ENCODE measurements at regions of chr12 and their contacts with region 1.

Region 1: GRCh38 chr12:110100315-110100970 is 23.7 kb upstream of the IFT81 start:
- DNase-seq: peak; percentile 44 to 87
- ATAC-seq: peak; percentile 86 to 94 (median 90)
- H3K4me3 ChIP-seq: no peak overlapping the region
- H3K4me3 Mint-ChIP-seq: no peak overlapping the region
- H3K27ac ChIP-seq: no peak overlapping the region
- H3K27ac Mint-ChIP-seq: peak overlapping the region in 1 of 2 donors; percentile 44
- H3K4me1 ChIP-seq: no peaks in the 10 kb centered on the region
- H3K4me1 Mint-ChIP-seq: peaks cover 7 to 9% of the 10 kb centered on the region in 2 donors
- H3K27me3 ChIP-seq: no peaks in the 10 kb centered on the region
- H3K27me3 Mint-ChIP-seq: no peaks in the 10 kb centered on the region
- CTCF ChIP-seq: peak; percentile 91

Region 2: DNA sequence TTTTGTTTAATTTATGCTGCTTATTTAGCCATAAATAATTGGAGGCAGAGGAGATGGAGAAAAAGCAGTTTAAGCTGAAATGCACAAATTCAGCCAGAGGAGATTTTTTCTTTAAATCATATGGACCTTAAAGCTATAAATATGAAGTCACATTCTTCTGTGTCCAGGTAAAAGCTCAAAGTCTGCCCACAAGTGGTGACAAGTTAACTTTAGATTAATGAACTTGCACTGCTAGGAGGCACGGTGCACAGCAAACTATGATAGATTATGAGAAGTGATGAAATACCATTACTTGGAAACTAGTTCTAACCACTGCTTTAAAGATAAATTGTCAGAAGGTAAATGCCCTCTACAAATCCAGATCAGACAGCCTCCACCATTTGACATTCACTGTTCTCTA is 92.8 kb after region 1 on chr12:
- intact Hi-C with region 1: no loop called
- DNase-seq: no peak
- ATAC-seq: no peak
- H3K4me3 ChIP-seq: no peak overlapping the region
- H3K4me3 Mint-ChIP-seq: no peak overlapping the region
- H3K27ac ChIP-seq: no peak overlapping the region
- H3K27ac Mint-ChIP-seq: no peak overlapping the region
- H3K4me1 ChIP-seq: no peaks in the 10 kb centered on the region
- H3K4me1 Mint-ChIP-seq: no peaks in the 10 kb centered on the region
- H3K27me3 ChIP-seq: no peaks in the 10 kb centered on the region
- H3K27me3 Mint-ChIP-seq: peaks cover 0 to 2% of the 10 kb centered on the region in 2 donors
- CTCF ChIP-seq: no peak

Region 3: GRCh38 chr12:110245369-110245772 is 144.9 kb after region 1 on chr12:
- intact Hi-C with region 1: loop called (anchors 1 kb)
- DNase-seq: peak; percentile 23 to 67
- ATAC-seq: peak; percentile 47 to 60 (median 58)
- H3K4me3 ChIP-seq: no peak overlapping the region
- H3K4me3 Mint-ChIP-seq: no peak overlapping the region
- H3K27ac ChIP-seq: no peak overlapping the region
- H3K27ac Mint-ChIP-seq: no peak overlapping the region
- H3K4me1 ChIP-seq: no peaks in the 10 kb centered on the region
- H3K4me1 Mint-ChIP-seq: no peaks in the 10 kb centered on the region
- H3K27me3 ChIP-seq: no peaks in the 10 kb centered on the region
- H3K27me3 Mint-ChIP-seq: peaks cover 0 to 4% of the 10 kb centered on the region in 2 donors
- CTCF ChIP-seq: peak; percentile 32

Region 4: DNA sequence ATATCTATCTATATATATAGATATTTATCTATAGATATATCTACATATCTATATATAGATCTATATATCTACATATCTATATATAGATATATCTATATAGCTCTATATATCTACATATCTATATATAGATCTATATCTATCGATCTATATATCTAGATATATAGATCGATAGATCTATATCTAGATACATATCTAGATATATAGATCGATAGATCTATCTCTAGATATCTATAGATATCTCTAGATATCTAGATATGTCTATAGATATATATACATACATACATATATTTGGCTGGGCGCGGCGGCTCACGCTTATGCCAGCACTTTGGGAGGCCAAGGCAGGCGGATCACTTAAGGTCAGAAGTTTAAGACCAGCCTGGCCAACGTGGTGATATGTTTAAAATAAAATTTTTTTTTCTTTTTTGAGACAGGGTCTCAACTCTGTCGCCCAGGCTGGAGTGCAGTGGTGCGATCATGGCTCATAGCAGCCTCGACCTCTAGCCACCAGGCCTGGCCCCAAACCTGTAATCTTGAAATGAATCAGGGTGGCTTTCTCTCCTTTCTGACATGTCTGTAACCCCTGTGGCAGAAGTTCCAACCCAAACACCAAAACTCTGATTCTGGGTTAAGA is 331.6 kb after region 1 on chr12:
- intact Hi-C with region 1: loop called (anchors 1 kb)
- DNase-seq: no peak
- ATAC-seq: no peak
- H3K4me3 ChIP-seq: peak overlapping the region; percentile 45
- H3K4me3 Mint-ChIP-seq: no peak overlapping the region
- H3K27ac ChIP-seq: no peak overlapping the region
- H3K27ac Mint-ChIP-seq: peak overlapping the region; percentile 95 to 98
- H3K4me1 ChIP-seq: peaks cover 5% of the 10 kb centered on the region
- H3K4me1 Mint-ChIP-seq: peaks cover 0 to 5% of the 10 kb centered on the region in 2 donors
- H3K27me3 ChIP-seq: no peaks in the 10 kb centered on the region
- H3K27me3 Mint-ChIP-seq: no peaks in the 10 kb centered on the region
- CTCF ChIP-seq: no peak

Region 5: GRCh38 chr12:110600254-110600653 is 499.8 kb after region 1 on chr12:
- intact Hi-C with region 1: loop called (anchors 2 kb)
- DNase-seq: peak in 1 of 2 donors; percentile 74
- ATAC-seq: peak in 2 of 3 donors; percentile 44 to 45
- H3K4me3 ChIP-seq: no peak overlapping the region
- H3K4me3 Mint-ChIP-seq: no peak overlapping the region
- H3K27ac ChIP-seq: no peak overlapping the region
- H3K27ac Mint-ChIP-seq: peak overlapping the region in 1 of 2 donors; percentile 51
- H3K4me1 ChIP-seq: peaks cover 11% of the 10 kb centered on the region
- H3K4me1 Mint-ChIP-seq: peaks cover 5 to 6% of the 10 kb centered on the region in 2 donors
- H3K27me3 ChIP-seq: no peaks in the 10 kb centered on the region
- H3K27me3 Mint-ChIP-seq: no peaks in the 10 kb centered on the region
- CTCF ChIP-seq: peak; percentile 55

Region 6: GRCh38 chr12:110888256-110888991 is 788.0 kb after region 1 on chr12:
- intact Hi-C with region 1: loop called (anchors 1 kb)
- DNase-seq: no peak
- ATAC-seq: no peak
- H3K4me3 ChIP-seq: peak overlapping the region; percentile 59
- H3K4me3 Mint-ChIP-seq: peak overlapping the region; percentile 89
- H3K27ac ChIP-seq: no peak overlapping the region
- H3K27ac Mint-ChIP-seq: peak overlapping the region in 1 of 2 donors; percentile 91
- H3K4me1 ChIP-seq: peaks cover 11% of the 10 kb centered on the region
- H3K4me1 Mint-ChIP-seq: peaks cover 6 to 7% of the 10 kb centered on the region in 2 donors
- H3K27me3 ChIP-seq: no peaks in the 10 kb centered on the region
- H3K27me3 Mint-ChIP-seq: peaks cover 0 to 3% of the 10 kb centered on the region in 2 donors
- CTCF ChIP-seq: peak; percentile 59